ENCODE measurements at regions of chr13 and their contacts with region 1.

Region 1: DNA sequence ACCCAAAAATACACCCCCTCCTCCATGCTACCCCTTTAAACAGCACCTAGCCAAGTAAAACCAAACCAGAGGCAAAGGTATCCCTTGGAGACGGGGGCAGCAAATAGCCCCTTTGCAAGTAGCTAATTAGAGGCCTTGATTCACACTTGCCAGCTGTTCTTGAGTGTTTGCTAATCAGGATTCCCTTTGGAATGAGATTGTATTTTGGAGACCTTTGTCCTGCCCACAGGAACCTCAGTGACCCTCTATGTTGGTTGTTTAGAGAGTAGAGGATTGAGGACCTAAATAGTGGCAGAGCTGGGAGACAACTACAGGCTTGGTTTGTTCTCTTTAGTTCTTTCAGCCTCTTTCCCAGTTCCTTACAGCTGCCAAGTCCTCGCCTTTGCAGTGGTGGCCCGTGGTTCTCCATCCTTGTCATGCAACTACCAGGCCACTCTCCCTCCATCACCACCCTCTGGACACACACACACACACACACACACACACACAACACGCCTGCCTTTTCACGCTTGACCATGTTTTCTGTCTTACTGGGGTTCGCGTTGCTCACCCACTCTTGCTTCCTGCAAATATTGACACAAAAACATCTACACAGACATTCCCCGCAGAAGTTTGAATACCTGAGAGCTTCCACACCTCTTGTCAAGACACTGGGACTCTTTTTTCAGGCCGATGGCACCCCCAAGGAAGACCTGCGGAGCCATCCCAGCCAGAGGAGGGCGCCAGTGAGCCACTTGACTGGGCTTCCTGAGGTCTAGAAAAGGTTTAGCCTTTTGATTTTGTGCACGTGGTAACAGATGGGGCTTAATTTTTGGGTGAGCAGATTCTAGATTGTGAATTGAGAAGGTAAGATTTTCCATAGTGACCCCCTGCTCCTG is 80.0 kb upstream of the GPR183 start:
- DNase-seq: peak; percentile 88
- ATAC-seq: peak; percentile 26
- H3K4me3 Mint-ChIP-seq: no peak overlapping the region
- H3K27ac Mint-ChIP-seq: peak overlapping the region; percentile 58
- H3K4me1 Mint-ChIP-seq: peaks cover 64% of the 10 kb centered on the region
- H3K27me3 Mint-ChIP-seq: no peaks in the 10 kb centered on the region

Region 2: DNA sequence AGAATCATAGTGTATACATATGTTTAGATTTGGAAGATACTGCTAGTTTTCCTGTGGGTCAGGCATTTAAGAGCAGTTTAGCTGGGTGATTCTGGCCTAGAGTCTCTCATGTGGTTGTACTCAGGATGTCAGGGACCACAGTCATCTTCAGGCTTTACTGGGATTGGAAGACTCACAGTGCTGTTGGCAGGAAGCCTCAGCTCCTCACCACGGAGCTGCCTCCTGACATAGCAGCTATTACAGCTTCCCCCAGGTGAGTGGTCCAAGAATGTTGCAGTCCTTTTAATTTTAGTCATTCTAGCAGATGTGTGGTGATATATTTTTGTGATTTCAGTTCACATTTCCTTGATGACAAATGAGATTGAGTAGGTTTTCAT is 112.1 kb before region 1 on chr13:
- CTCF ChIA-PET with region 1: interaction called, 139 read pairs
- POLR2A ChIA-PET with region 1: no interaction called
- DNase-seq: peak; percentile 69
- ATAC-seq: peak; percentile 84
- H3K4me3 Mint-ChIP-seq: peak overlapping the region; percentile 13
- H3K27ac Mint-ChIP-seq: peak overlapping the region; percentile 80
- H3K4me1 Mint-ChIP-seq: peaks cover 93% of the 10 kb centered on the region
- H3K27me3 Mint-ChIP-seq: no peaks in the 10 kb centered on the region

Region 3: GRCh38 chr13:99356158-99357091 is 30.7 kb before region 1 on chr13:
- CTCF ChIA-PET with region 1: interaction called, 16 read pairs
- POLR2A ChIA-PET with region 1: interaction called, 3 read pairs
- DNase-seq: peak; percentile 86
- ATAC-seq: peak; percentile 81
- H3K4me3 Mint-ChIP-seq: peak overlapping the region; percentile 39
- H3K27ac Mint-ChIP-seq: peak overlapping the region; percentile 89
- H3K4me1 Mint-ChIP-seq: peaks cover 96% of the 10 kb centered on the region
- H3K27me3 Mint-ChIP-seq: no peaks in the 10 kb centered on the region

Region 4: DNA sequence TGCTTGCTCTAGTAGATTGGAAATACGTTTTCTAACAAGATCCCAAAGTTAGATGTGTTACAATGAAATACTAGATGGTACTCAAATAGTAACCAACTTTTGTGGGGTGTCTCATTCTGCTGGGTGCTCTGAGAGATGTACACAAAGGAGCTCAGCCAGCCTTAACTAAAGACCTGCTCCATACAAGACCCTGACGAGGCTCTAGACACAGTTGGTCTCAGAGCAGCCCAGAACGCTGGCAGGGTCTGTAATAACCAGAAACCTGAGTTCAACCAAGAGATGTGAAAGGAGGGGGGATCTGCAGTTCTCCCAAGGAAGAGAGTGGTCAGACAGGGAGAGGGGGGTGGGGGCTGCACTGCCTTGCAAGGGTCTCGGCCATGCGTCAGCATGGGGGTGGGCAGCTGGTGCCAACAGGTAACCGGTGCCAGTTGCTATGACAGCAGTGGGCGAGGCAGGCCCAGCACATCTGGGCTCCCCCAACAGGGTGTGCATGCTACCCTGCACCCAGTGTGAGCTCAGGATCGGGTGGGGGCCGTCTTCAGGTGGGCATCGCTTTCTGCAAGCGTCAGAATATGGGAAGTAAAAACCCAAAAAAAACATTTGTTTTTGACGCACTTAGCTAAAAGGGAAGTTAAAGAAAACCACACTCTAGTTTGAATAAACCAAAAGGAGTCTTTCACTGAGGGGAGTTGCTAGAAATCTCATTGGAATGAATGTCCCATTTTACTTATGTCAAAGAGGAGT is 12.0 kb before region 1 on chr13:
- CTCF ChIA-PET with region 1: interaction called, 37 read pairs
- POLR2A ChIA-PET with region 1: no interaction called
- DNase-seq: peak; percentile 21
- ATAC-seq: peak; percentile 37
- H3K4me3 Mint-ChIP-seq: peak overlapping the region; percentile 51
- H3K27ac Mint-ChIP-seq: peak overlapping the region; percentile 81
- H3K4me1 Mint-ChIP-seq: peaks cover 85% of the 10 kb centered on the region
- H3K27me3 Mint-ChIP-seq: no peaks in the 10 kb centered on the region

Region 5: GRCh38 chr13:99417201-99418102 is 30.3 kb after region 1 on chr13:
- CTCF ChIA-PET with region 1: interaction called, 44 read pairs
- POLR2A ChIA-PET with region 1: interaction called, 4 read pairs
- DNase-seq: no peak
- ATAC-seq: no peak
- H3K4me3 Mint-ChIP-seq: peak overlapping the region; percentile 35
- H3K27ac Mint-ChIP-seq: peak overlapping the region; percentile 76
- H3K4me1 Mint-ChIP-seq: peaks cover 39% of the 10 kb centered on the region
- H3K27me3 Mint-ChIP-seq: no peaks in the 10 kb centered on the region